T-cell (primary cell): ENCODE measurements at regions of chr19 and their contacts with region 1.

Region 1: GRCh38 chr19:47152224-47153017 is 21.8 kb downstream of the SAE1 start:
- DNase-seq: no peak
- ATAC-seq: no peak
- H3K4me3 ChIP-seq: no peak overlapping the region
- H3K4me3 Mint-ChIP-seq: no peak overlapping the region
- H3K27ac ChIP-seq: no peak overlapping the region
- H3K27ac Mint-ChIP-seq: peak overlapping the region in 1 of 2 donors; percentile 32
- H3K4me1 ChIP-seq: peaks cover 34 to 53% of the 10 kb centered on the region in 2 experiments
- H3K4me1 Mint-ChIP-seq: peaks cover 50 to 58% (median 56%) of the 10 kb centered on the region in 3 donors
- H3K27me3 ChIP-seq: no peaks in the 10 kb centered on the region
- H3K27me3 Mint-ChIP-seq: no peaks in the 10 kb centered on the region

Region 2: DNA sequence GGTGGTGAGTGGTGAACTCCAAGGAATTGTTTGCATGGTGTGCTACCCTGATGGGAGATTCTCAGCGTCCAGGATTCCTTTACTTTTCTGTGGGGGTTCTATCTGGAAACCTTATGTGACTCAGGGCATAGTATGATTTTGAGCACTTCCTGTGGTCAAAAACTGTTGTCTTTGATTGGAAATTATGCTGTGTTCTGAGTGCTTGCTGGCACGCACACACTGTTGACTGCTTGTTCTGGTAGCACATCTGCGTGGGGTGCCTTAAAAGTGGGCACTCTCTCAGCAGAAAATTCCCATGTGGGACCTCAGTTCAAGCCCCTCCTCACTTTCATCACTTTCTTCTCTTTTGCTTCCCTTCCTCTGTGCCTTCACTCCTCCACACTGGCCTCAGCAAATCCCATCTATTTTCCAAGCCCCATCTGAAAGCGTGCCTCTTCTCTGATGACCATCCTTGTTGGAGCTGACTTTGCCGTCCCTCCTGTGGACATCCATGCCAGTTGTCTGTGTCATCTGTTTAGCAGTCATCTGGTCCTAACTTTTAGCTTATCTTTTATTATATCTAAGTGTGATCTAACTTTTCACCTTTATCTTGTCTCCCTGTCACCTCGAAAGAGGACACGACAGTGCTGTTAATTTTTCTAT is 189.2 kb before region 1 on chr19:
- CTCF ChIA-PET with region 1: no interaction called
- POLR2A ChIA-PET with region 1: no interaction called
- DNase-seq: no peak
- ATAC-seq: no peak
- H3K4me3 ChIP-seq: no peak overlapping the region
- H3K4me3 Mint-ChIP-seq: no peak overlapping the region
- H3K27ac ChIP-seq: no peak overlapping the region
- H3K27ac Mint-ChIP-seq: peak overlapping the region; percentile 11 to 38
- H3K4me1 ChIP-seq: peaks cover 9 to 47% of the 10 kb centered on the region in 2 experiments
- H3K4me1 Mint-ChIP-seq: peaks cover 27 to 55% (median 52%) of the 10 kb centered on the region in 3 donors
- H3K27me3 ChIP-seq: no peaks in the 10 kb centered on the region
- H3K27me3 Mint-ChIP-seq: no peaks in the 10 kb centered on the region

Region 3: GRCh38 chr19:47210689-47211316 is 58.4 kb after region 1 on chr19:
- CTCF ChIA-PET with region 1: interaction called, 7 to 36 read pairs
- POLR2A ChIA-PET with region 1: no interaction called
- DNase-seq: peak; percentile 49 to 89 (median 72)
- ATAC-seq: peak; percentile 67 to 91 (median 80)
- H3K4me3 ChIP-seq: no peak overlapping the region
- H3K4me3 Mint-ChIP-seq: no peak overlapping the region
- H3K27ac ChIP-seq: no peak overlapping the region
- H3K27ac Mint-ChIP-seq: peak overlapping the region; percentile 71 to 80
- H3K4me1 ChIP-seq: peaks cover 0 to 10% of the 10 kb centered on the region in 2 experiments
- H3K4me1 Mint-ChIP-seq: peaks cover 9 to 11% (median 11%) of the 10 kb centered on the region in 3 donors
- H3K27me3 ChIP-seq: no peaks in the 10 kb centered on the region
- H3K27me3 Mint-ChIP-seq: no peaks in the 10 kb centered on the region

Region 4: DNA sequence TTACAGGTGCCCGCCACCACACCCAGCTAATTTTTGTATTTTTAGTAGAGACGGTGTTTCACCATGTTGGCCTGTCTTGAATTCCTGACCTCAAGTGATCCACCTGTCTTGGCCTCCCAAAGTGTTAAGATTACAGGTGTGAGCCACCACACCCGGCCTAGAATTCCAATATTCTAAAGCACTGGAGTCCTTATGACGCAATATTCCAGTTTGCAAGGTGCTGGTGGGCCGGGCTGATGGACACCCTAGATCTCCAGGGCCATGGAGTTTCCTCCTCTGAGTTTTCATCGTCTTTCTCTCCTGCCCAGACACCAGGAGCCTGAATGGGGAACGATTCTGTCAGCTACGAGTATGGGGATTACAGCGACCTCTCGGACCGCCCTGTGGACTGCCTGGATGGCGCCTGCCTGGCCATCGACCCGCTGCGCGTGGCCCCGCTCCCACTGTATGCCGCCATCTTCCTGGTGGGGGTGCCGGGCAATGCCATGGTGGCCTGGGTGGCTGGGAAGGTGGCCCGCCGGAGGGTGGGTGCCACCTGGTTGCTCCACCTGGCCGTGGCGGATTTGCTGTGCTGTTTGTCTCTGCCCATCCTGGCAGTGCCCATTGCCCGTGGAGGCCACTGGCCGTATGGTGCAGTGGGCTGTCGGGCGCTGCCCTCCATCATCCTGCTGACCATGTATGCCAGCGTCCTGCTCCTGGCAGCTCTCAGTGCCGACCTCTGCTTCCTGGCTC is 188.2 kb after region 1 on chr19:
- CTCF ChIA-PET with region 1: no interaction called
- POLR2A ChIA-PET with region 1: interaction called in 1 of 2 experiments, 10 read pairs
- DNase-seq: no peak
- ATAC-seq: no peak
- H3K4me3 ChIP-seq: no peak overlapping the region
- H3K4me3 Mint-ChIP-seq: no peak overlapping the region
- H3K27ac ChIP-seq: no peak overlapping the region
- H3K27ac Mint-ChIP-seq: no peak overlapping the region
- H3K4me1 ChIP-seq: peaks cover 0 to 17% of the 10 kb centered on the region in 2 experiments
- H3K4me1 Mint-ChIP-seq: peaks cover 9 to 17% (median 10%) of the 10 kb centered on the region in 3 donors
- H3K27me3 ChIP-seq: peaks cover 0 to 6% of the 10 kb centered on the region in 2 experiments
- H3K27me3 Mint-ChIP-seq: no peaks in the 10 kb centered on the region